OCI-LY7 (cell line): ENCODE measurements at regions of chr13 and their contacts with region 1.

Region 1: DNA sequence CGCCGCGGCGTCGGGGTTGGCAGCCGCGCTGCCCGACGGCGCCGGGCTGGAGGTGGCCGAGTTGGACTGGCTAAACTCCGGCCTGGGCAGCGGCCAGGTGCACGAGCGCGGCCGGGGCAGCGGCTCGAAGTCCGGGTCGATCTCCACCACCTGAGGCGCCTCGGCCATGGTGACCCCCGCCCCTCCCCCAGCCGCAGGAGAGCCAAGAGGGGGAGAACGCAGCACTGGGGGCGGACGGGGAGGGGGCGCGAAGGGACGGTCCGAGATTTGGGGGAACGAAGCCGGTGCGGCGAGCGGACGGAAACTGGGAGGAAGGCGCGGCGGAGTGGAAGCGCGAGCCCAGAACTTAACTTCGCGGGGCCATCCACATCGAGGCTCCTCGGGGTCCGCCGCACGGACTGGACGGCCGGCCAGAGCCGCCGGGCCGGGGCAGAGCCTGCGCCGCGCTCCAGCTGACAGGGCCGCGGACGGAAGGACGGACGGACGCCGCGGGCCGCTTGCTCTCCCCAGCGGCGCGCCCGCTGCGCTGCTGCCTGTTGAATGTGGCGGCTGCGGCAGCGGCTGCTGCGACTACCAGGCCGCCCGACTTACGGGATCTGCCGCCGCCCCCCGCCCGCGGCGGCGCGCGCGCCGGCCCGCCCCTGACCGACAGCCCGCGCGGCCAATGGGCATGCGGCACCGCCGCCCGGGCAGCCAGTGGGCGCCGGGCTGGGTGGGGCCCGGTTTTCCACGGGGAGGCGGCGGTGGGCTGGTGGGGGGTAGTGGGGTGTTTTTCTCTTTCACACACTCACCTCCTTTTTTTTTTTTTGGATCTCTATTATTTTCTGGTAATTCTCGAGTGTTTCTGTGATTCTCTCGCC is at the start of gene FOXO1:
- DNase-seq: peak; percentile 93
- H3K4me3 ChIP-seq: peak within 1 kb of the TSS; percentile 91
- H3K27ac ChIP-seq: peak within 1 kb of the TSS; percentile 83
- H3K4me1 ChIP-seq: peaks cover 39% of the 10 kb centered on the region
- CTCF ChIP-seq: no peak
- total RNA-seq, gene FOXO1: 24.0 and 29.2 TPM in 2 replicates

Region 2: DNA sequence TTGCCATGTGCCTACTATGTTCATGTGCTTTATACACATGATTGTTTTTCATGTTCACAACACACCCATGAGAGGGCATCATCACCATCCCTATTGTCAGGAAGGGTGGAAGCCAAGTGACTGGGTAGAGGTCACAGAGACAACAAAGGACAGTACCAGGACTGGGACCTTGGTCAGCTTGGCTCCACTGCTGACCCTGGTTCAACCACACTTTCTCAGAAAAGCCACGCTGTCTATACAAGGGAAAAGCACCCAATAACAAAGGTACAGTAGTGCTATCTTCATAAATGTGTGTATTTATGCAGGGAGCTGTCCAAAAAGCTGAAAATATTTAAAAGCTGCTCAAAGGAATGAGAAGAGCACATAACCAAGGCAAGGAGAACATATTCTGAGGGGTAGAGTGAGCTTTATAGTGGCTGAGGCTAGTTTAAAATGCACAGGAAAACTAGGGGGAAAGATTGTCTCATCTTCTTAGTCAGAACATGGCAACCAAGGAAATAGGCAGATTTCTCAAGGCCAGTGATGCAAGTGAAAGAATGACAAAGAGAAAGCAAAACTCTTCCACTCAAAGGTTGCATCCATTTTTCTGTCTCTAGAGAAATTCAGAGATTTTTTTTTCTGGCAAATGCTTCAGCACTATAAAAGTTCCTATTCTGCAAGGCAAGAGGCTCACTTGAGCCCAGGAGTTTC is 414.8 kb before region 1 on chr13:
- CTCF ChIA-PET with region 1: no interaction called
- POLR2A ChIA-PET with region 1: no interaction called
- intact Hi-C with region 1: loop called (anchors 5 kb)
- DNase-seq: peak; percentile 35
- H3K4me3 ChIP-seq: no peak overlapping the region
- H3K27ac ChIP-seq: no peak overlapping the region
- H3K4me1 ChIP-seq: peaks cover 17% of the 10 kb centered on the region
- CTCF ChIP-seq: peak; percentile 52; the same call in 1 of the 2 replicates

Region 3: GRCh38 chr13:40433577-40433976 is 232.7 kb before region 1 on chr13:
- CTCF ChIA-PET with region 1: interaction called, 11 read pairs
- POLR2A ChIA-PET with region 1: interaction called, 7 read pairs
- intact Hi-C with region 1: no loop called
- DNase-seq: peak; percentile 86
- H3K4me3 ChIP-seq: no peak overlapping the region
- H3K27ac ChIP-seq: peak overlapping the region; percentile 98
- H3K4me1 ChIP-seq: peaks cover 91% of the 10 kb centered on the region
- CTCF ChIP-seq: no peak

Region 4: GRCh38 chr13:40477623-40478608 is 188.4 kb before region 1 on chr13:
- CTCF ChIA-PET with region 1: interaction called, 5 read pairs
- POLR2A ChIA-PET with region 1: interaction called, 7 read pairs
- intact Hi-C with region 1: loop called (anchors 1 kb)
- DNase-seq: peak; percentile 54
- H3K4me3 ChIP-seq: peak overlapping the region; percentile 67
- H3K27ac ChIP-seq: peak overlapping the region; percentile 96
- H3K4me1 ChIP-seq: peaks cover 83% of the 10 kb centered on the region
- CTCF ChIP-seq: no peak

Region 5: DNA sequence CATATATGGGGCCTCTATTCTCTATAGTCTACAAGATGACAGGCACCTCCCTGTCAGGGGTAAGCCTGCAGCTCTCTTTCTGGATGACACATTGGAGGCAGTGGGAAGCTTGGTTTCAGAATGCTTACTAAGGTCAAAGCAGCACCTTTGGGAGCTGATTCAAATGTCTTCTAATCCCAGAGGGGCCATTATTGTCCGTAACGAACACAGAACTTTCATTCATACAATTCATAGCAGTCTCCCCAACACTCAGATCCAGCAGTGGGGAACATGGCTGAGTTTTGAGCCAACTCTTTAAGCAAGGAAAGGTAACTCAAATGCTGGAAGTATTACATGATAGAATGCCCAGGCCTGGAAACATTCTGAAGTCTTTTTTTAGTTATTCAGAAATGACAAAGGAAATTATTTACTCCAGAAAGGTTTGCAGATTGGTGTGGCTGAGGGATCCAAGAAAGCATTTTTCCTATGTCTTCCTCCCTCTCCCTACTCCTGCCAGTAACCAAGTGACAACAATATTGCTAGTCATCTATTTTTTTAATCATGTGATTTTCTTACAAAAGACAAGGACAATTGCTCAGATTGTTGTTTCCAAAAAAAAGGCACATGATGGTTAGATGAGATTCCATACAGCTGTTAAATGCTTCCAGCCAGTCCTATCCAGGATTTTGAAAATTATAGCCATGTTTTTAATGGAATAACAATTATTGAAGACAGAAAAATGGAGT is 118.5 kb before region 1 on chr13:
- CTCF ChIA-PET with region 1: no interaction called
- POLR2A ChIA-PET with region 1: no interaction called
- intact Hi-C with region 1: no loop called
- DNase-seq: no peak
- H3K4me3 ChIP-seq: no peak overlapping the region
- H3K27ac ChIP-seq: no peak overlapping the region
- H3K4me1 ChIP-seq: peaks cover 36% of the 10 kb centered on the region
- CTCF ChIP-seq: no peak

Region 6: GRCh38 chr13:40629678-40630384 is 36.4 kb before region 1 on chr13:
- CTCF ChIA-PET with region 1: no interaction called
- POLR2A ChIA-PET with region 1: no interaction called
- intact Hi-C with region 1: loop called (anchors 1 kb)
- DNase-seq: peak; percentile 78
- H3K4me3 ChIP-seq: peak overlapping the region; percentile 56
- H3K27ac ChIP-seq: peak overlapping the region; percentile 77
- H3K4me1 ChIP-seq: peaks cover 68% of the 10 kb centered on the region
- CTCF ChIP-seq: peak; percentile 34; the same call in 1 of the 2 replicates

Region 7: GRCh38 chr13:40682449-40683240 is 16.4 kb after region 1 on chr13:
- CTCF ChIA-PET with region 1: interaction called, 26 read pairs
- POLR2A ChIA-PET with region 1: interaction called, 5 read pairs
- intact Hi-C with region 1: no loop called
- DNase-seq: peak; percentile 86
- H3K4me3 ChIP-seq: peak overlapping the region; percentile 11
- H3K27ac ChIP-seq: peak overlapping the region; percentile 41
- H3K4me1 ChIP-seq: peaks cover 39% of the 10 kb centered on the region
- CTCF ChIP-seq: peak; percentile 88

Region 8: DNA sequence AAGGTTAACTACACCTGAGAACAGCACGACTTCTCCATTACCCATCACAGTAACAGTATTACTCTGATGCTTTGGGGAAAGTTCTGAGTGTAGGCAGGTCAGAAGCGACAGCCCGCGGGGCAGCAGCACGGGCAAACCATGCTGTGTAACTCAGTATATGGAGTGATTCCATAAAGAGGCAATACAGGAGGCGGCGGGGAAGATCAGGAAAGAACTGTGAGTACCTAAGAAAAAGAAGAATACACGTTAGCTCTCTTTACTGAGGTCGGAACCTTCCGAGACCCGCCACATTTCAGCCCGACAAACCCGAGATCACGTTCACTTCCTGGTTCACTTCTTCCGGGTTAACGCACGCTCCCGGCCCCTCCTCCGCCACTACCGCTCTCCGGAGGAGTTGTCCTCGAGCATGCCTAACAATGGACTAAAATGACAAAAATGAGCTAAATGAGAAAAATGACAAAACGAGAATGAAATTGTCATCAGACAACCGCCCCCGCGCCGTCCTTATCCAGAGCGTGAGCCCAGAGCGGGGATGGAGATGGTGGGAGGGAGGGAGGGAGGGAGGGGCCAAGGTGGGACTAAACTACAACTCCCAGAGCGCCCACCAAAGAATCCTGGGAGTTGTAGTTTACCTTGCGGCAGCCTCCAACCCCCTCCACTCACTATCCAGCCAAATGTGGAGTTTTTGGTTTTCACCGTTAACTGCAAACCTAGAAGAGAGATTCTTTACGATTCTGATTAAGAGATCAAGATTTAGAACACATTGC is 597.2 kb after region 1 on chr13 and contains the start of gene MTRF1:
- CTCF ChIA-PET with region 1: no interaction called
- POLR2A ChIA-PET with region 1: no interaction called
- intact Hi-C with region 1: no loop called
- DNase-seq: peak; percentile 89
- H3K4me3 ChIP-seq: peak within 1 kb of the TSS; percentile 80
- H3K27ac ChIP-seq: peak within 1 kb of the TSS; percentile 60
- H3K4me1 ChIP-seq: peaks cover 7% of the 10 kb centered on the region
- CTCF ChIP-seq: no peak
- total RNA-seq, gene MTRF1: 22.1 and 24.9 TPM in 2 replicates